Tibial artery (tissue), 4 donors: ENCODE measurements at regions of chrX and their contacts with region 1.

Region 1: GRCh38 chrX:14377427-14377826 is 151.9 kb upstream of the GLRA2 start:
- DNase-seq: no peak
- H3K4me3 ChIP-seq: no peak overlapping the region
- H3K27ac ChIP-seq: no peak overlapping the region
- H3K4me1 ChIP-seq: no peaks in the 10 kb centered on the region
- H3K27me3 ChIP-seq: no peaks in the 10 kb centered on the region
- CTCF ChIP-seq: no peak

Region 2: GRCh38 chrX:13266641-13267345 is 1110.6 kb before region 1 on chrX:
- intact Hi-C with region 1: no loop called
- DNase-seq: no peak
- H3K4me3 ChIP-seq: no peak overlapping the region
- H3K27ac ChIP-seq: no peak overlapping the region
- H3K4me1 ChIP-seq: no peaks in the 10 kb centered on the region
- H3K27me3 ChIP-seq: no peaks in the 10 kb centered on the region
- CTCF ChIP-seq: no peak

Region 3: GRCh38 chrX:14837155-14837554 is 459.7 kb after region 1 on chrX:
- intact Hi-C with region 1: no loop called
- DNase-seq: no peak
- H3K4me3 ChIP-seq: no peak overlapping the region
- H3K27ac ChIP-seq: no peak overlapping the region
- H3K4me1 ChIP-seq: no peaks in the 10 kb centered on the region
- H3K27me3 ChIP-seq: no peaks in the 10 kb centered on the region
- CTCF ChIP-seq: no peak

Region 4: GRCh38 chrX:14916017-14916674 is 538.7 kb after region 1 on chrX:
- intact Hi-C with region 1: loop called (anchors 10 kb)
- DNase-seq: no peak
- H3K4me3 ChIP-seq: no peak overlapping the region
- H3K27ac ChIP-seq: no peak overlapping the region
- H3K4me1 ChIP-seq: peaks cover 0 to 10% (median 0%) of the 10 kb centered on the region in 4 donors
- H3K27me3 ChIP-seq: no peaks in the 10 kb centered on the region
- CTCF ChIP-seq: no peak